ENCODE measurements at regions of chr1 and their contacts with region 1.

Region 1: DNA sequence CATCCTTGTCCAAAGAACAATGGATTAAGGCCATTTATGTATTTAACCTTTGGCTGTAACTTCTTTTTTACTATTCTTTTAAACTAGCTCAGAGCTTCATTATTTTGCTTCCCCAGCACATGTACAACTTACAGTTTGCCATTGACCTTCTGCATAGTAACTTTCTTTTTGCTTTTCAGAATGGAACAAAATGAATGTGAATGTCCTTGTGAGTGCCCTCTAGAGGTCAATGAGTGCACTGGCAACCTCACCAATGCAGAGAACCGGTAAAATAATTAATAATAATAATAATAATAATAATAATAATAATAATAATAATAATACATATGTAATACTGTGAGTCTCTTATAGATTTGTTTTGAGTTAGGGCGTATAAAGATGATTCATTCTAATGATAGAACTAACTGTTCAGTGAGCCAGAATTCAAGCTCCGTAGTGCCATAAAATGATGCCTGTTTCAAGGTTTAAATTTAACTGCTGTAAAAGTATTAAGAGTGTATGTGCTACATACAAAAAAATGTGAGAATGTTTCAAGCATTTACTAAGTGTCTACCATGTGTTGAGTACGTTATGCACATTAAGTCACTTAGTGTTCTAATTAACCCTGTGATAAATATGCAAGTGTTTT is 69.0 kb upstream of the RAVER2 start:
- DNase-seq: no peak
- ATAC-seq: no peak

Region 2: DNA sequence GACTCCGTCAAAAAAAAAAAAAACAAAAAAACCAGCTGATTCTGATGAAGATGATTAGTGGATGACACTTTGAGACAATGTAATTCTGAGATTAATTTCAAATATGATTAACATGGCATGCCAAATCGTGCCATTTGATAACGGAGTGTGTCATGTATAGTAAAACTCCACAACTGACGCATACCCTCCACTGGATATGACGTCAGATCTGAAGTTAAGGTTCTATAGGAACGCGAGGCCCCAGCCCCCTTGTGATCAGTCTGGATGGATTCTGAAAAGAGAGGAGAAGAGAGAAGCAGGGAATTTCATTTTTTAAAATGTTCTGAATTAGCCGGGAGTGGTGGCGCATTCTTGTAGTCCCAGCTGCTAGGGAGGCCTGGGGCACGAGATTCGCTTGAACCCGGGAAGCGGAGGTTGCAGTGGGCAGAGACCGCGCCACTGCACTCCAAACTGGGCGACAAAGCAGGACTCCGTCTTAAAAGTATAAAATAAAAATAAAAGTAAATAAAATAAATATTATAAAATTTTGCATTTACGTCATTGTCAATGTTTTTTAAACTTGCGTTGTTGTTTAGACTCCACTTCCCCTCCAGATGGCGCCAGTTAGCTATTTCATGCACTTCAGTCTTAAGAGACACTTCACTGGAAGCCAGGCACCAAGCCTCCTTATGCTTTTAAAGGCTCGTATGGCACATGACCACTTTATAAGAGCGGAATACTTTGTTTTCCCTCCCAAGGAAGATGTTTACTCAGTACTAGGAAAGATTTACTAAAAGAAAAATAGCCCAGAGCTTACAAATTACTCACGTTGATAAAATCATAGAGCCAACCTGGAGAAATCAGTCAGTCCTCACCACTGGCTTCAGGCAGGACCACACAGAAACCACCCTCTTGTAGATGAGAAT is 406.9 kb before region 1 on chr1:
- intact Hi-C with region 1: loop called (anchors 5 kb)
- DNase-seq: no peak
- ATAC-seq: peak; percentile 72

Region 3: DNA sequence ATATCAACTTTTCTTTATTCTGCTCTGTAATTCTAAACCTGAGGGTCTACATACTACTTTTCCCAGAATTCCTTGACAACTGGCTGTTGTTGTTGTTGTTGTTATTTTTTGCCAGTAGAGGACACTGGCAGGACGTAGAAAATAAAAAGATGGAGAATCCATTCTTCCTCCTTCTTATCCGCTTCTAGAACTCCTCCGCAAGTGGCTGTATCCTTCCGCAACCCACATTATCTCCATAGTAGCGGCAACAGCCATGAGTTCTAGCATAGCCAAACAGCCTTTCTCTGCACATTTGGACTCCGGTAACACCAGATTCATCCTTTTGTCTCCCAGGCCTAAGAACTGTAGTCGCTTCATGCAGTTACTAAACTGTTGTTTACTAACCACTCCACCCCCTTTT is 297.0 kb before region 1 on chr1:
- intact Hi-C with region 1: loop called (anchors 10 kb)
- DNase-seq: no peak
- ATAC-seq: no peak